Heart left ventricle (tissue), 16 donors: ENCODE measurements at regions of chr12 and their contacts with region 1.

Region 1: DNA sequence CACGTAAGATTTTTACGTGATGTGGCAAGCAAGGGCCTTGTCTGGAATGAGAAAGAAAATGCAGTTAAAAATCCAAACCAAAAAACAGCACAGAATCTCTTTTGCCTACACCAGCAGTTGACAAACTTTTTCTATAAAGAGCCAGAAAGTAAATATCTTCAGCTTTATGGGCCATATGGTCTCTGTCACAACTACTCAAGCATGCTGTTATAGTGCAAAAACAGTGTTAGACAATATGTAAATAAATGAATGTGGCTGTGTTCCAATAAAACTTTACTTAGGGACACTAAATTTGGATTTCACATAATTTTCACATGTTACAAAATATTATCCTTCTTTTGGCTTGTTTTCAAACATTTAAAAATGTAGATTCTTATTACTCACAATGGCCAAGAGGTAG is 6.2 kb upstream of the ELK3 start:
- DNase-seq: no peak
- ATAC-seq: no peak
- H3K4me3 ChIP-seq: no peak overlapping the region
- H3K27ac ChIP-seq: no peak overlapping the region
- H3K4me1 ChIP-seq: peaks cover 0 to 15% (median under 1%) of the 10 kb centered on the region in 12 donors
- H3K27me3 ChIP-seq: no peaks in the 10 kb centered on the region
- CTCF ChIP-seq: no peak
- POLR2A ChIP-seq: no peak

Region 2: DNA sequence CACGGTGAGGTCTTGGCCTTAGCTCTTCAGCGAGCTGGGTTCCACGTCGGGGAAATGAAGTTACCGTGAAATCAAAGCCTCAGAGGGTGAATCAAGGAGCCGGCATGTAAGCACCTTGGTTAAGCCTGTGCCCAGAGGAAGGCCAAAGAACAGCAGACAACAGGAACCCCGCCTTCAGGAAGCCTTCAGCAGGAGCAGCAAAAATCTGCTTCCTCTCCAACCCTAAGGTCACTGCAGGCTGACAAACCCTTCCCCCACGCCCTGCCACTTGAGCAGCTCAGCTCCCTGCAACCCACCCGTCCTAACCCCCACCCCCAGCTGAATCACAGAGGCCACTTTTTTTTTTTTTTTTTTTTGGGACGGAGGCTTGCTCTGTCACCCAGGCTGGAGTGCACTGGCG is 79.6 kb before region 1 on chr12:
- intact Hi-C with region 1: no loop called
- DNase-seq: peak; percentile 66 to 75 (median 72)
- ATAC-seq: peak; percentile 49 to 91 (median 88)
- H3K4me3 ChIP-seq: peak overlapping the region in 3 of 12 donors; percentile 8 to 18 (median 13)
- H3K27ac ChIP-seq: peak overlapping the region; percentile 48 to 88 (median 76)
- H3K4me1 ChIP-seq: peaks cover 0 to 24% (median 8%) of the 10 kb centered on the region in 12 donors
- H3K27me3 ChIP-seq: no peaks in the 10 kb centered on the region
- CTCF ChIP-seq: no peak
- POLR2A ChIP-seq: no peak

Region 3: DNA sequence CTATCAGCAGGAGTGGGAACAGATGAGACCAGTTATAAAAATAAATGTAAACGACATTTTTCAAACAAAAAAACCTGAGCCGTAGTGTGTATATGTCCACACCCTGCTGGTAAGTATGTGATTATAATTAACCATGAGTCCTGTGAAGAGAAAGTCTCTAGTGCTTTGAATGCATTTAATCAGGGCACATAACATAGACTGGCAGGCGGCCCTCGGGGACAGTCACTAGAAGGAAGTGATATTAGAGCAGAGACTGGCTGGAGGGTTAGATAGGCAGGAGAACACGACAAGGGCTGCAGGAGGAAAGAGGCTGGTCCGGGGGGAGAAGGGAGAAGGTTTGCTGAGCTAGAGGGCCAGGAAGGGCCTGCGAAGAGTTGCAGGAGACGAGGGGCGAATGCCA is 17.6 kb before region 1 on chr12:
- intact Hi-C with region 1: loop called in 1 of 10 experiments (anchors 2 kb)
- DNase-seq: peak in 2 of 5 donors; percentile 36 to 48
- ATAC-seq: peak in 3 of 4 donors; percentile 32 to 74 (median 62)
- H3K4me3 ChIP-seq: no peak overlapping the region
- H3K27ac ChIP-seq: peak overlapping the region in 11 of 12 donors; percentile 25 to 69 (median 54)
- H3K4me1 ChIP-seq: peaks cover 3 to 42% (median 18%) of the 10 kb centered on the region in 12 donors
- H3K27me3 ChIP-seq: no peaks in the 10 kb centered on the region
- CTCF ChIP-seq: no peak
- POLR2A ChIP-seq: no peak